SK-N-SH (cell line): ENCODE measurements at regions of chr6 and their contacts with region 1.

Region 1: DNA sequence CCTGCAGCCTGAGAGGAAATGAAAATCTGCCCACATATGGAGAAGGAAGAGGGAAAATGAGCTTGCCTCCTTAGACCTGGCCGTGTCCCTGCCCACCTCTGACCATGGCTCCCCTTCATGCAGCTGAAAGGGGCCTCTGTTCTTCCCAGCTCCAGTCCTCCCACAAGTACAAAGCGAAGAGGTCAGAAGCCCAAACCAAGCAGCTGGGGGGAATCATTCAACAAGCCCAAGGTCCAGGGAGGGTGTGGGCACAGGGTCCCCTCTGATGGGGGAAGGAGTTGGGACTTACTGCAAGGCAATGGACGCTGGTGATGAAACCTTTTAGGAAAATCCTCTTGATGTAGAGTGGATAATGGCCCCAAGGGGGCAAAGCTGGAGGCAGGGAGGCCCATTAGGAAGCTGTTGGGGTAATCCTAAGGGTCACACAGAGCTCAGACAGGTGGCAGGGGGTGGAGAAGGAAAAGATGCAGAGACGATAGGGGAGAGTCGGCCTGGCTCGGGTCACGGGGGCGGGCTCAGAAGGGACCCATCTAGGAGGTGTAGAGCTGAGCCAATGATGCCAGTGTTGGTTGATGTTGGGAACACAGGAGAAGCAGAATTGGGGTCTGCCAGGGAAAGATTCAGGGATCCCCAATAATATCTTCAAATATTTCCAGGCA is 16.1 kb upstream of the GRM4 start:
- DNase-seq: peak; percentile 4
- H3K4me3 ChIP-seq: no peak overlapping the region
- H3K27ac ChIP-seq: no peak overlapping the region
- H3K4me1 ChIP-seq: no peaks in the 10 kb centered on the region
- H3K27me3 ChIP-seq: no peaks in the 10 kb centered on the region
- CTCF ChIP-seq: no peak
- EP300 ChIP-seq: no peak
- RAD21 ChIP-seq: no peak

Region 2: DNA sequence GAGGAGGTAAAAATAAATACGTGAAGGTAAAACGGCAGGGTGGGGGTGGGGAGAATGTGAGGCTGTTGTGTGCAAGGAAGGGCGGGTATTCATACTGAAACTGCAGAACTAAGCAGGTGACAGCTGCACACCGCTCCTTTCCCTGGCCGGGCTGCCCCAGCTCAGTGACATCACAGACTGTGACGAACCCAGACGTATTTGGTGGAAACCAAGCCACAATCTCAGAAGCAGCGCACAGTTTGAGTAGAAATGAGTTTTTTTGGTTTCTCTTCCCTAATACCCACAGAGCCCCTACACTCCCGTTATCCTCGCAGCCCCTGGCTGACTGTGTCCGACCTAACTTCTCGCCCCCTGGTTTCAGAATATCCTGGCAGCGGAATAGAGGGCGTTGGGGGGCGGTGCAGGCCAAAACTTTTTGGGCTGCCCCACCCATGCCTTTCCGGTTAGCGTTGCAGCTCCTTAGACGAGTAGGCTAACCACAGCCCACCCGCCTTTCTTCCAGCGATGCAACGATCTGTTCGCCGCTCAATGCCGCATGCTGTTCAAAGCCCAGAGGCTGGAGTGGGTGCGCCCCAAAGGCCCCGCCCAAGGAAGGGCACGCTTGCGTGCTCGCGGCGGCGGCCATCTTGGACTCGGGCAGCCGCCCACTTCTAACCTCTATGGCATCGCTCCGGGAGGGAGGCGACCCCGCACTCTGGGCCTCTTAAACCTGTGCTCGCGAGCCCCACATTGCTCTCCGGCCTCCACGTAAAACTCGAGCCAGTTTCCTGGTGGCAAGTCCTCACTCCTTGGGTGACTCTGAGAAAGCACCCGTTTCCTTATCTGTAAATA is 591.0 kb before region 1 on chr6:
- CTCF ChIA-PET with region 1: no interaction called
- POLR2A ChIA-PET with region 1: no interaction called
- DNase-seq: peak; percentile 93
- H3K4me3 ChIP-seq: peak overlapping the region; percentile 61 to 64
- H3K27ac ChIP-seq: peak overlapping the region in 1 of 2 experiments; percentile 59; a peak in 1 of 4 replicates
- H3K4me1 ChIP-seq: peaks cover 5 to 8% of the 10 kb centered on the region in 2 experiments; a peak in 1 of 4 replicates
- H3K27me3 ChIP-seq: no peaks in the 10 kb centered on the region
- CTCF ChIP-seq: no peak
- EP300 ChIP-seq: no peak
- RAD21 ChIP-seq: no peak

Region 3: GRCh38 chr6:33840048-33840926 is 321.7 kb before region 1 on chr6:
- CTCF ChIA-PET with region 1: no interaction called
- POLR2A ChIA-PET with region 1: no interaction called
- DNase-seq: no peak
- H3K4me3 ChIP-seq: no peak overlapping the region
- H3K27ac ChIP-seq: peak overlapping the region; percentile 24 to 84; a peak in 3 of 4 replicates
- H3K4me1 ChIP-seq: peaks cover 28 to 30% of the 10 kb centered on the region in 2 experiments; a peak in 3 of 4 replicates
- H3K27me3 ChIP-seq: no peaks in the 10 kb centered on the region
- CTCF ChIP-seq: no peak
- EP300 ChIP-seq: peak in 1 of 2 experiments; percentile 79; a peak in 1 of 4 replicates
- RAD21 ChIP-seq: no peak

Region 4: GRCh38 chr6:33988121-33989015 is 173.6 kb before region 1 on chr6:
- CTCF ChIA-PET with region 1: no interaction called
- POLR2A ChIA-PET with region 1: no interaction called
- DNase-seq: peak; percentile 45
- H3K4me3 ChIP-seq: no peak overlapping the region
- H3K27ac ChIP-seq: no peak overlapping the region
- H3K4me1 ChIP-seq: peaks cover 0 to 7% of the 10 kb centered on the region in 2 experiments; a peak in 1 of 4 replicates
- H3K27me3 ChIP-seq: no peaks in the 10 kb centered on the region; the same call in 1 of the 2 replicates
- CTCF ChIP-seq: no peak
- EP300 ChIP-seq: no peak
- RAD21 ChIP-seq: no peak

Region 5: DNA sequence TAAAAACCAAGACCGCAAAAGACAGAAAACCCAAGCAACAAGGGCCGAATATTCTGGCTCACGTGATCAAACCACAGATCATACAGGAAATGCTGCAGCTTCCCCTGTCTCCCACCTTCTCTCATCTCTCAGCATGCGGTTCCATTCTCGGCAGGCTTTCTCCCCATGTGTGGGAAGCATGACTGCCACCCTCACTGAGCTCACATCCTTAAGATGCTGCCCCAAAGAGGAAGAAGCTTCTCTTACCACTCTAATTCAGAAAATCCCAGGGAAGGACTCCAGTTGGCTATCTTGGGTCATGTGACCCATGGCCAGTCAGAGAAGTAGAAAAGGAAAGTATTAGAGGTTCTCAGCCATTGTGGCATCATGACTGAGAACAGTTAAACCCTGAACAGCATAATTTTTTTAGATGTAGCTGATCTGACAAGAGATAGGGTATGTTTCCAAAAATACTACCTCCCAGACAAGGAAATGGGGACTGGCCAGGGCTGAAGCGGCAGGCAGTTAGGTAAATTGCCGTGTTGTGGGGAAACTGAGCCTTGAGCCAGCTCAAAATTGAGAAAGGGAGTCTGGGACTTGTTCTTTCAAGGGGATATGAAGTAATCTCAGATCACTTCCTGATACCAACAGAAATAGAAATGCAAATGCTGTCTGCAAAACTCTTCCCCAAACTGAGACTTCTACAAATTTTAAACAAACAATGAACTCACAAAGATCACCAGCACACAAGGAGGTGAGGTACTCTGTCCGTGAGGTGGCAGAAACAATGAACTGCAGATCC is 21.0 kb after region 1 on chr6:
- CTCF ChIA-PET with region 1: interaction called, 16 read pairs
- POLR2A ChIA-PET with region 1: no interaction called
- DNase-seq: no peak
- H3K4me3 ChIP-seq: no peak overlapping the region
- H3K27ac ChIP-seq: no peak overlapping the region
- H3K4me1 ChIP-seq: no peaks in the 10 kb centered on the region
- H3K27me3 ChIP-seq: no peaks in the 10 kb centered on the region
- CTCF ChIP-seq: no peak
- EP300 ChIP-seq: no peak
- RAD21 ChIP-seq: no peak